ENCODE measurements at regions of chr2 and their contacts with region 1.

Region 1: DNA sequence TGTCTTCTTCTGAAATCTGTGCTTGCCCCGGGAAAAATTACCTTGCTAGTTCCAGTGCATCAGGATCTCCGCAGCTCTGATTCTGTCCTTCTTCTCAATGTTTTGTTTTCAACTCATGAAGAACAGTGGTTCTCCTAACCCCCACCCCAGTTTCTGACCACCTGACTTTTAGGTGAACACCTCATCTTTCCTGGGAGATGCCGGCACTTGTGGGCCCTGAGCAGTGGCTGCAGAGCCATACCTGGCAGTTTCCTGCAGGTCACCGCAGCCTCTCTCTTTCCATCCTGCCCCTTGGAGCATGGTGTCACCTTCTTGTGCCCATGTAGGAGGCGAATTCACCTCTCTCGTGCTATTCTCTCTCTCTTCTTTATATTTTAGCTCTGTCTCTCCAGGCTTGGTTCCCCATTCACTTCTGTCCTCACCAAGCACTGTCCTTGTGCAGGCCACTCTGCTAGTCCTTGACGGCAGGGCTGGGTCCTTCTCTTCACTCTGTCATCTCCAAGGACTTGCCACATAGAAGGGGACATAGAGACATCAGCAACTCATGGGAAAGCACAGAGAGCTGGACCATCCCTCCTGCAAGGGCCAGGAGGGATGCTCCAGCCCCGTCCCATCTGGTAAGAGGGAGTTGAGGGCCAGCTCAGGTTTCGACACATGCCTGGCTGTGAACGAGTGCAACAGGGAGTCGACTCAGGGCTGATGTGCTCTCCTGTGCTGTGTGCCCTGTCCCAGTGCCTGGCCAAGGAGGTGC is 59.1 kb downstream of the DDX1 start:
- DNase-seq: no peak
- H3K4me3 ChIP-seq: no peak overlapping the region
- H3K27ac ChIP-seq: no peak overlapping the region
- H3K27me3 ChIP-seq: peaks cover 8% of the 10 kb centered on the region
- CTCF ChIP-seq: no peak

Region 2: DNA sequence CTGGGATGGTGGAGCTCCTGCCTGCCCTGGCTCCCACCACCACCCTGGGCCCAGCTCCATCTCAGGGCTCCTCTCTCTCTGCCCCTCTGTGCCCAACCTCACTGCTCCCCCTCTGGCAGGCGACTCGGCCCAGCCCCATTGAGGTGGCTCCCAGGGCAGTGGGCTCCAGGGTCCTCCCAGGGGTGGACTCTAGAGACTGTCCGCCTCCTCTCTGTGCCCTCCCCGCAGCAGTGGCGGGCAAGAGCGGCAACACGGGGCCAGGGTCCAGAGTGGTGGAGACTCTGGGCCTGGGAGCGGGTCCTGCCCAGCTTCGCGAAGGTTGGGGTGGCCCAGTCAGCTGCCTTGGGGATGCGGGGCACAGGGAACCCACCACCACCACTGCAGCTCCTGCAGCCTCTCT is 31.7 kb before region 1 on chr2:
- CTCF ChIA-PET with region 1: no interaction called
- POLR2A ChIA-PET with region 1: no interaction called
- DNase-seq: no peak
- H3K4me3 ChIP-seq: no peak overlapping the region
- H3K27ac ChIP-seq: no peak overlapping the region
- H3K27me3 ChIP-seq: no peaks in the 10 kb centered on the region
- CTCF ChIP-seq: no peak

Region 3: GRCh38 chr2:15636972-15637785 is 13.6 kb before region 1 on chr2:
- CTCF ChIA-PET with region 1: interaction called, 12 read pairs
- POLR2A ChIA-PET with region 1: no interaction called
- DNase-seq: peak; percentile 46
- H3K4me3 ChIP-seq: no peak overlapping the region
- H3K27ac ChIP-seq: no peak overlapping the region
- H3K27me3 ChIP-seq: no peaks in the 10 kb centered on the region
- CTCF ChIP-seq: peak; percentile 87

Region 4: DNA sequence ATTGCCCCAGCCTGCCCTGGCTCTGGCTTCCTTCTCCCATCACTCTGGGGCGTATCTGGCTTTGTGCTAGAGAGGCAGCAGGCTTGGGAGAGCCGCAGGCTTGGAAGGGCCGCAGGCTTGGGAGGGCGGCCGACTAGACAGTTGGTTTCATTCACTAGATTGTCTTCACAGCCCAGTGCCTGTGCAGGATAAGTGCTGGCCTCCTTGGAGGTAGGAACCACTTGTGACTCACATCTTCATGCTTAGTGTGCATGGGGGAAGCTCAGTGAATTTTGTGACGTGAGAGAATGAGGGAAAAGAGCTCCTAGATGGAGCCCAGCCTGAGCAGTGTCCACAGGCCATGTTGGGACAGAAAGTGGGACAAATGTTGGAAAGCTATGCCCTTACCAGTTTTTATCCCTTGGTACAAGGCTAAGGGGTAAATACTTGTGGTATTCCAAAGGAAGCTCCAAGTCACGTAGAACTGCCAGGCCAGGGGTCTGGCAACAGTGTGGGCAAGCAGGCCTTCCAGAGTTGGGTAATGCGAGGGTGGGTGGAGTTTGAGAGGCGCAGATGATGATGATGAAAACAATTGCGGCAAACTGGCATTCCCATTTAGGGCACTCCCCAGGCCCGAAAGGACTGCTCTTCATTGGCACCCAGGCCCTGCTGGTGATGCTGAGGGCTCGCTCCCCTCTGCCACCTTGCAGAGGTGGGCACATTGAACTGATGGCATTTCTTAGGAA is 41.0 kb after region 1 on chr2:
- CTCF ChIA-PET with region 1: no interaction called
- POLR2A ChIA-PET with region 1: no interaction called
- DNase-seq: no peak
- H3K4me3 ChIP-seq: no peak overlapping the region
- H3K27ac ChIP-seq: no peak overlapping the region
- H3K27me3 ChIP-seq: no peaks in the 10 kb centered on the region
- CTCF ChIP-seq: no peak

Region 5: GRCh38 chr2:17226941-17227490 is 1576.2 kb after region 1 on chr2:
- CTCF ChIA-PET with region 1: no interaction called
- POLR2A ChIA-PET with region 1: no interaction called
- DNase-seq: no peak
- H3K4me3 ChIP-seq: no peak overlapping the region
- H3K27ac ChIP-seq: no peak overlapping the region
- H3K27me3 ChIP-seq: no peaks in the 10 kb centered on the region
- CTCF ChIP-seq: no peak

Measured in AG04450 (cell line).